CD4-positive, alpha-beta memory T cell (primary cell): ENCODE measurements at regions of chr19 and their contacts with region 1.

Region 1: DNA sequence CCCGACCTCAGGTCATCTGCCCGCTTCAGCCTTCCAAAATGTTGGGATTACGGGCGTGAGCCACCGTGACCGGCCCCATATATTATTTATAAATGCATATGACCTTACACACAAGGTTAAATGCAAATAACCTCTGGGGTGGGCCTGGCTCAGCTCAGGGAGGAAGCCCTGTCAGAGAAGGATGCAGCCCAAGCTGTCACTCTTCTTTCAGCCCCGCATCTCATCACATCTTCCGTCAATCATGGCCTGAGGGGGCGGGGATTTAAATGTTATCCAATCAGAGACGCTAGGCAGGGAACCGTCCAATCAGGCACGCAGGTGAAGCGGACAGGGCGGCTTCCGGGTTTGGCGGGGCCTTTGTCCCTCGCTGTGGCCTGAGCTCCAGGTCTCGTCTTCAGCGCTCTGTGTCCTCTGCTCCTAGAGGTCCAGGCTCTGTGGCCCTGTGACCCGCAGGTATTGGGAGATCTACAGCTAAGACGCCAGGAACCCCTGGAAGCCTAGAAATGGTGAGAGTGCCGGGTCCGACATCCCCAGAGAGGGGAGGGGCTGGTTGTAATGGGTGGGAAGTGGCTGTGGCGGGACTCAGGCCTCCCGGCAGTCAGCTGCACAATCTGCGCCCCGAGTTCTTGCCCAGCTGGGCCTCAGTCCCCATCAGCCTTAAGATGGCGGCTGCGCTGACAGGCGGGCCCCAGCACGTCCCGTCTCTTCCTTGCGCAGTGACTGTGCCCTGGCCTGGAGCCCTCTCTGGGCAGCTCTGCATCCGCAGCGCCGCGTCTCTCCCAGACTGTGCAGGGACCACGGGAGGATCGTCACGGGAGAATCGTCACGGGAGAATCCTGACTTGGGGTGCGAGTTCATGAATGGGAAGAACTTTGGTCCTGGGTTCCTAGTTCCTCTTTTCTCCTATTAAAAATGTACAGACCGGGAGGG is at the start of gene ZNF430:
- DNase-seq: peak; percentile 93 to 97 (median 93)
- H3K4me3 ChIP-seq: peak within 1 kb of the TSS; percentile 92 to 98
- H3K4me3 Mint-ChIP-seq: peak within 1 kb of the TSS; percentile 99 to 100 (median 100)
- H3K27ac ChIP-seq: peak within 1 kb of the TSS; percentile 95
- H3K27ac Mint-ChIP-seq: peak within 1 kb of the TSS; percentile 100
- H3K4me1 ChIP-seq: peaks cover 43% of the 10 kb centered on the region
- H3K4me1 Mint-ChIP-seq: peaks cover 26 to 53% (median 39%) of the 10 kb centered on the region in 4 donors
- H3K27me3 ChIP-seq: no peaks in the 10 kb centered on the region
- H3K27me3 Mint-ChIP-seq: no peaks in the 10 kb centered on the region
- total RNA-seq, gene ZNF430: 41.9 to 50.3 TPM

Region 2: DNA sequence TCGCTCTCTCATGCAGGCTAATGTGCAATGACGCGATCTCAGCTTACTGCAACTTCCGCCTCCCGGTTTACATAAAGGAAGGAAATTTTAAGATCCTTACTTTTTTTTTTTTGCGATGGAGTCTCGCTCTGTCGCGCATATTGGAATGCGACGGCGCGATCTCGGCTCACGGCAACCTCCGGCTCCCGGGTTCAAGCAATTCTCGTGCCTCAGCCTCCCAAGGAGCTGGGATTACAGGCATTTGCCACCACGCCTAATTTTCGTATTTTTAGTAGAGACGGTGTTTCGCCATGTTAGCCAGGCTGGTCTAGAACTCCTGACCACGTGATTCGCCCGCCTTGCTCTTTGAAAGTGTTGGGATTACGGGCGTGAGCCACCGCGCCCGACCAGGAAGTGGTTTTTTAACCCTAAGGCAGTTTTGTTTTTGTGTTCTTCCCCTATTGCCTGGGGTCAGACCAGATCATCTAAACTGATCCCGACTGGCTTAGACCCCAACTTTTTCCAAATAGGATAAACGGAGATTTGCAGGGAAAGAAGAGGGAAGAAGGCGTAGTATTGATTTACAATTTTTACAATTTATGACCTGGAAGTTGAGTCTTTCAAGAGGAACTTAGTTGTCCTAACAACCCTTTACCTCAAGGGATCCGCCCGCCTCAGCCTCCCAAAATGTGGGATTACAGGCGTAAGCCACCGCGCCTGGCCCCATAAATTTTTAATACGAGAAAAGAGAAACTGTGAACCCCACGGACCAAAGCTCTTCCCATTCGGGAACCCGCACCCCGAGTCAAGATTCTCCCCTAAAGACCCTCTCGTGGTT is 597.0 kb before region 1 on chr19:
- CTCF ChIA-PET with region 1: no interaction called
- POLR2A ChIA-PET with region 1: interaction called, 9 read pairs
- intact Hi-C with region 1: loop called (anchors 2 kb)
- DNase-seq: peak; percentile 9 to 36 (median 29)
- H3K4me3 ChIP-seq: peak overlapping the region; percentile 78 to 81
- H3K4me3 Mint-ChIP-seq: peak overlapping the region; percentile 91 to 99 (median 97)
- H3K27ac ChIP-seq: peak overlapping the region; percentile 43
- H3K27ac Mint-ChIP-seq: peak overlapping the region; percentile 89 to 98 (median 93)
- H3K4me1 ChIP-seq: no peaks in the 10 kb centered on the region
- H3K4me1 Mint-ChIP-seq: peaks cover 3 to 31% (median 17%) of the 10 kb centered on the region in 4 donors
- H3K27me3 ChIP-seq: no peaks in the 10 kb centered on the region
- H3K27me3 Mint-ChIP-seq: no peaks in the 10 kb centered on the region

Region 3: DNA sequence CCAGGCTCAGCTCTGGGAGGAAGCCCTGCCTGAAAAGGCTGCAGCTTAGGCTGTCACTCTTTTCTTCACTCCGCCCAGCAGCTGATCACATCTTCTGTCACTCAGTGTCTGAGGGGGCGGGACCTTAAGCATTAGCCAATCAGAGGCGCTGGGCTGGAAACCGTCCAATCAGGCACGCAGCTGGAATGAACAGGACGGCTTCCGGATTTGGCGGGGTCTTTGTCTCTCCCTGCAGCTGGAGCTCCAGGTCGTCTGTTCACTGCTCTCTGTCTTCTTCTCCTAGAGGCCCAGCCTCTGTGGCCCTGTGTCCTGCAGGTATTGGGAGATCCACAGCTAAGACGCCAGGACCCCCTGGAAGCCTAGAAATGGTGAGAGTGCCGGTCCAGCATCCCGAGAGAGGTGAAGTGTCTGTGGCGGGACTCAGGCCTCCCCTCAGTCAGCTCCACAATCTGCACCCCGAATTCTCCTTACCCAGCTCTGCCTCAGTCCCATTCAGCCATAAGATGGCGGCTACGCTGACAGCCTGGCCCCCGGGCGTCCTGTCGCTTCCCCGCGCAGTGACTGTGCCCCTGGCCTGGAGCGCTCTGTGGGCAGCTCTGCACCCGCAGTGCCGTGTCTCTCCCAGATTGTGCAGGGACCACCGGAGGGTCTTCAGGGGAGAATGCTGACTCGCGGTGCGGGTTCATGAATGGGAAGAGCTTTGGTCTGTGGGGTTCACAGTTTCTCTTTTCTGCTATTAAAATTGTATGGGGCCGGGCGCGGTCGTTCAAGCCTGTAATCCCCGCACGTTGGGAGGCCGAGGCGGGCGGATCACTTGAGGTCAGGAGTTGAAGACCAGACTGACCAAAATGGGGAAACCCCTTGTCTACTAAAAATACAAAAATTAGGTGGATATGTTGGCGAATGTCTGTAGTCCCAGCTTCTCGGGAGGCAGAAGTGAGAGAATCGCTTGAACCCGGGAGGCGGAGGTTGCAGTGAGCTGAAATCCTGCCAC is 244.2 kb before region 1 on chr19 and contains the start of gene ZNF66:
- CTCF ChIA-PET with region 1: interaction called, 3 read pairs
- POLR2A ChIA-PET with region 1: interaction called, 7 read pairs
- intact Hi-C with region 1: loop called (anchors 1 kb)
- DNase-seq: peak; percentile 93 to 96 (median 95)
- H3K4me3 ChIP-seq: peak within 1 kb of the TSS; percentile 79 to 85
- H3K4me3 Mint-ChIP-seq: peak within 1 kb of the TSS; percentile 94 to 100 (median 99)
- H3K27ac ChIP-seq: peak within 1 kb of the TSS; percentile 74
- H3K27ac Mint-ChIP-seq: peak within 1 kb of the TSS; percentile 87 to 99 (median 98)
- H3K4me1 ChIP-seq: peaks cover 6% of the 10 kb centered on the region
- H3K4me1 Mint-ChIP-seq: peaks cover 13 to 37% (median 20%) of the 10 kb centered on the region in 4 donors
- H3K27me3 ChIP-seq: no peaks in the 10 kb centered on the region
- H3K27me3 Mint-ChIP-seq: no peaks in the 10 kb centered on the region
- total RNA-seq, gene ZNF66: 14.7 to 17.1 TPM

Region 4: DNA sequence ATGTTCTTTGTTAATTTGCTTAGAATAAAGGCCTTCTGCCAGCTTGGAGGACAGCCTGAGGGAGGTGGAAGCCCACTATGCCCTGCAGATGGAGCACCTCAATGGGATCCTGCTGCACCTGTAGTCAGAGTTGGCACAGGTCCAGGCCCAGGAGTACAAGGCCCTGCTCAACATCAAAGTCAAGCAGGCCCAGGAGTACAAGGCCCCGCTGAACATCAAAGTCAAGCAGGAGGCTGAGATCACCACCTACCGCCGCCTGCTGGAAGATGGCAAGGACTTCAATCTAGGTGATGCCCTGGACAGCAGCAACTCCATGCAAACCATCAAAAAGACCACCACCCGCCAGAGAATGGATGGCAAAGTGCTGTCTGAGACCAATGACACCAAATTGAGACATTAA is 55.8 kb before region 1 on chr19:
- CTCF ChIA-PET with region 1: no interaction called
- POLR2A ChIA-PET with region 1: no interaction called
- intact Hi-C with region 1: no loop called
- DNase-seq: peak in 2 of 5 donors; percentile 0 to 1
- H3K4me3 ChIP-seq: no peak overlapping the region
- H3K4me3 Mint-ChIP-seq: no peak overlapping the region
- H3K27ac ChIP-seq: no peak overlapping the region
- H3K27ac Mint-ChIP-seq: peak overlapping the region in 2 of 7 donors; percentile 22 to 29
- H3K4me1 ChIP-seq: no peaks in the 10 kb centered on the region
- H3K4me1 Mint-ChIP-seq: no peaks in the 10 kb centered on the region
- H3K27me3 ChIP-seq: no peaks in the 10 kb centered on the region
- H3K27me3 Mint-ChIP-seq: peaks cover 2 to 3% of the 10 kb centered on the region in 2 donors

Region 5: DNA sequence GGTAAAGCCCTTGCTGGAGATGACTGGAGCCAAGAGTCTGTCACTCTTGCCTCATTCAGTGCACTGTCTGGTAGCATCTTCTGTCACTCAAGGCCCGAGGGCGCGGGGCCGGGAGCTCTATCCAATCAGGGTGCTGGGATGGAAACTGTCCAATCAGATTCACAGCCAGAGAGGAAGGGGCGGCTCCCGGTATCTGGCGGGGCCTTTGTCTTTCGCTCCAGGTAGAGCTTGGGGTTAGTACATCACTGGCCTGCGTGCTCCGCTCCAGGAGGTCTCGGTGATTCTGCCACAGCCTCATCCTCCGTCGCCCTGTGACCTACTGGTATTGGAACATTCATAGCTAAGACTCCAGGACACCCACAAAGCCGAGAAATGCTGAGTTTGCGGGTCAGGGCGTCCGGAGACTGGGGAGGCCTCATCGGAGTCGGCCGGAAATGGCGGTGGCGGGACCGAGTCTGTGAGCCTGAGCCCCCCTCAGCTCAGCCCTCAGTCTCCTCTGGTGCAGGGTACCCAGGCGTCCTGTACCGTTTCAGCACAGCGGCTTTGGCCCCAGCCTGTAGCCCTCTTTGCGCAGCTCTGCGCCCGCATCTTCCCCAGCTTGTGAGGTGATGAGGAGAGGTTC is 20.7 kb before region 1 on chr19:
- CTCF ChIA-PET with region 1: no interaction called
- POLR2A ChIA-PET with region 1: interaction called, 22 read pairs
- intact Hi-C with region 1: loop called (anchors 1 kb)
- DNase-seq: peak; percentile 85 to 93 (median 91)
- H3K4me3 ChIP-seq: peak overlapping the region; percentile 47 to 66
- H3K4me3 Mint-ChIP-seq: peak overlapping the region; percentile 84 to 91 (median 86)
- H3K27ac ChIP-seq: no peak overlapping the region
- H3K27ac Mint-ChIP-seq: peak overlapping the region; percentile 41 to 77 (median 55)
- H3K4me1 ChIP-seq: peaks cover 5% of the 10 kb centered on the region
- H3K4me1 Mint-ChIP-seq: peaks cover 0 to 8% (median 5%) of the 10 kb centered on the region in 4 donors
- H3K27me3 ChIP-seq: no peaks in the 10 kb centered on the region
- H3K27me3 Mint-ChIP-seq: no peaks in the 10 kb centered on the region

Region 6: GRCh38 chr19:21141787-21142464 is 121.4 kb after region 1 on chr19 and contains the start of gene ZNF431:
- CTCF ChIA-PET with region 1: interaction called, 3 read pairs
- POLR2A ChIA-PET with region 1: interaction called, 15 read pairs
- intact Hi-C with region 1: loop called (anchors 2 kb)
- DNase-seq: peak; percentile 89 to 93 (median 90)
- H3K4me3 ChIP-seq: peak within 1 kb of the TSS; percentile 71 to 94
- H3K4me3 Mint-ChIP-seq: peak within 1 kb of the TSS; percentile 96 to 99 (median 98)
- H3K27ac ChIP-seq: peak within 1 kb of the TSS; percentile 74
- H3K27ac Mint-ChIP-seq: peak within 1 kb of the TSS; percentile 91 to 99 (median 97)
- H3K4me1 ChIP-seq: peaks cover 21% of the 10 kb centered on the region
- H3K4me1 Mint-ChIP-seq: peaks cover 24 to 59% (median 40%) of the 10 kb centered on the region in 4 donors
- H3K27me3 ChIP-seq: no peaks in the 10 kb centered on the region
- H3K27me3 Mint-ChIP-seq: no peaks in the 10 kb centered on the region
- total RNA-seq, gene ZNF431: 32.1 to 34.4 TPM

Region 7: GRCh38 chr19:21482863-21483276 is 462.3 kb after region 1 on chr19:
- CTCF ChIA-PET with region 1: no interaction called
- POLR2A ChIA-PET with region 1: no interaction called
- intact Hi-C with region 1: loop called (anchors 2 kb)
- DNase-seq: peak; percentile 56 to 73 (median 66)
- H3K4me3 ChIP-seq: no peak overlapping the region
- H3K4me3 Mint-ChIP-seq: peak overlapping the region in 2 of 8 donors; percentile 6 to 57
- H3K27ac ChIP-seq: no peak overlapping the region
- H3K27ac Mint-ChIP-seq: no peak overlapping the region
- H3K4me1 ChIP-seq: no peaks in the 10 kb centered on the region
- H3K4me1 Mint-ChIP-seq: peaks cover 0 to 2% (median 0%) of the 10 kb centered on the region in 4 donors
- H3K27me3 ChIP-seq: no peaks in the 10 kb centered on the region
- H3K27me3 Mint-ChIP-seq: no peaks in the 10 kb centered on the region